Colonic mucosa (tissue), 4 donors: ENCODE measurements at regions of chr1 and their contacts with region 1.

Region 1: GRCh38 chr1:150281837-150282653 is at the start of gene CIART:
- DNase-seq: peak; percentile 86
- H3K4me3 ChIP-seq: peak within 1 kb of the TSS; percentile 43
- H3K27ac ChIP-seq: peak within 1 kb of the TSS; percentile 58
- H3K4me1 ChIP-seq: peaks cover 3% of the 10 kb centered on the region
- H3K27me3 ChIP-seq: no peaks in the 10 kb centered on the region
- CTCF ChIP-seq: no peak
- total RNA-seq, gene CIART: 0.69 to 1.6 TPM

Region 2: GRCh38 chr1:150168960-150169601 is 113.0 kb before region 1 on chr1:
- intact Hi-C with region 1: no loop called
- DNase-seq: peak; percentile 62
- H3K4me3 ChIP-seq: no peak overlapping the region
- H3K27ac ChIP-seq: no peak overlapping the region
- H3K4me1 ChIP-seq: no peaks in the 10 kb centered on the region
- H3K27me3 ChIP-seq: no peaks in the 10 kb centered on the region
- CTCF ChIP-seq: peak; percentile 58

Region 3: GRCh38 chr1:150259758-150260669 is 22.0 kb before region 1 on chr1:
- intact Hi-C with region 1: loop called (anchors 2 kb)
- DNase-seq: peak; percentile 80
- H3K4me3 ChIP-seq: no peak overlapping the region
- H3K27ac ChIP-seq: peak overlapping the region; percentile 55
- H3K4me1 ChIP-seq: peaks cover 7% of the 10 kb centered on the region
- H3K27me3 ChIP-seq: peaks cover 4% of the 10 kb centered on the region
- CTCF ChIP-seq: no peak

Region 4: DNA sequence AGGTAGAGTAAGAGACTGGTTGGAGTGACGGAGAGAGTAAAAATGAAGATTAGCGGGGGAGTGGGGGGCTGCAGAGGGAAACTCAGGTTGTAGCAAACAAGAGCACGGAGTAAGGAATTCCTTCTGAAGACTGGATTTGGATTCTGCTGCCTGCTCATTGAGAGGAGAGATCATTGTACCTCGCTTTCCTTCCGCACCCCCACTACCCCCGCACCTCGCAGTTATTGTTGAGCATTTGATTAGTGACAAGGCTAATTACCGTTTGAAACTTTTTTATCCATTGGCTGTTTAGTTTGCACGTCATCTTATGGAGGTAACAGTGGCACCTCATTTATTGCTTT is 39.8 kb after region 1 on chr1:
- intact Hi-C with region 1: no loop called
- DNase-seq: no peak
- H3K4me3 ChIP-seq: peak overlapping the region; percentile 61
- H3K27ac ChIP-seq: peak overlapping the region; percentile 89
- H3K4me1 ChIP-seq: no peaks in the 10 kb centered on the region
- H3K27me3 ChIP-seq: no peaks in the 10 kb centered on the region
- CTCF ChIP-seq: no peak